B cell (primary cell): ENCODE measurements at regions of chr13 and their contacts with region 1.

Region 1: DNA sequence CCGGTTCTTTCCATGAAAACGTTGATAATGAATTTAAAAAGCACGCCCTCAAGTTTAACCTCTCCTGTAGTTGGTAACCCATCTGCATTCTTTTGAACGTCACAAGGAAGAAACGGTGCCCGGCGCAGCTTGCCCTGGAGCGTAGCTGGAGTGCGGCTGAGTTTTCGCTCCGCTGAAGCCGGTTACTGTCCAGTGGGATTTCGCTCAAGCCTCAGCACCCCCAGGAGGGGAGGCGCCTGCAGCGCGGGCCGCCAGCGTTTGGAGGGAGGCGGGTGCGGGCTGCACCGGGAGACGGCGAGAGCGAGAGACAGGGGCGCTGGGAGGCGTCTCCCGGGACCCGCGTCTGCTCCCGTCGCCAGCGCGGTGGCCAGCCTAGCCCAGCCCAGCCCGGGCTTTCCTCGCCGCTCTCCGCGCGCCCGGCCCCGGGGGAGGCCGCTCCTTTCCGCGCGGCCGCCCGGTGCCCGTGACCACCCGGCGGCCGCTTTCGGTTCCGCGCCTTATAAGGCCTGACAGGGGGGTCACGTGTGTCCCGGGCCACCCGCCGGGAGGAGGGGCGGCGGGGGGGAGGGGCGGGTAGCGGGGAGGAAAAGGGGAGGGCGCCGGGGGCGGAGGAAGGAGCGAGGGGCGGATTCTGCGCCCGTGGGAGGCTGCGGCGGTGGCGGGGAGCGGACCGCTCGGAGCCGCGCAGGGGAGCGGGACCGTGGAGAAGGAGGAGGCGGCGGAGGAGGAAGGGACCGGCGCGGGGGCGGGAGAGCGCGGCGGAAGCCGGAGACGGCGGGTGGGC is 8.3 kb upstream of the DGKH start:
- DNase-seq: peak; percentile 82
- ATAC-seq: peak; percentile 83
- H3K4me3 ChIP-seq: peak overlapping the region; percentile 61 to 75 (median 66)
- H3K4me3 Mint-ChIP-seq: peak overlapping the region; percentile 93
- H3K27ac ChIP-seq: peak overlapping the region in 1 of 2 donors; percentile 45
- H3K27ac Mint-ChIP-seq: peak overlapping the region; percentile 81
- H3K4me1 ChIP-seq: peaks cover 11 to 19% of the 10 kb centered on the region in 2 donors
- H3K4me1 Mint-ChIP-seq: peaks cover 20% of the 10 kb centered on the region
- H3K27me3 ChIP-seq: peaks cover 0 to 23% (median 11%) of the 10 kb centered on the region in 4 experiments
- H3K27me3 Mint-ChIP-seq: peaks cover 12% of the 10 kb centered on the region
- CTCF ChIP-seq: no peak

Region 2: GRCh38 chr13:41916173-41916954 is 123.8 kb before region 1 on chr13:
- CTCF ChIA-PET with region 1: no interaction called
- POLR2A ChIA-PET with region 1: no interaction called
- intact Hi-C with region 1: loop called (anchors 5 kb)
- DNase-seq: peak; percentile 28
- ATAC-seq: peak; percentile 83
- H3K4me3 ChIP-seq: no peak overlapping the region
- H3K4me3 Mint-ChIP-seq: peak overlapping the region; percentile 34
- H3K27ac ChIP-seq: peak overlapping the region; percentile 4 to 32
- H3K27ac Mint-ChIP-seq: peak overlapping the region; percentile 8
- H3K4me1 ChIP-seq: peaks cover 12 to 21% of the 10 kb centered on the region in 2 donors
- H3K4me1 Mint-ChIP-seq: peaks cover 36% of the 10 kb centered on the region
- H3K27me3 ChIP-seq: no peaks in the 10 kb centered on the region
- H3K27me3 Mint-ChIP-seq: no peaks in the 10 kb centered on the region
- CTCF ChIP-seq: no peak